Activated B cell treated with CpG ODN at 0.5 μM for 24 hours (primary cell): ENCODE measurements at regions of chr15 and their contacts with region 1.

Region 1: GRCh38 chr15:90886041-90886614 is 1.8 kb downstream of the FES start:
- DNase-seq: peak; percentile 78
- ATAC-seq: peak; percentile 69
- H3K4me3 Mint-ChIP-seq: peak overlapping the region; percentile 71
- H3K27ac Mint-ChIP-seq: peak overlapping the region; percentile 76
- H3K4me1 Mint-ChIP-seq: peaks cover 34% of the 10 kb centered on the region
- H3K27me3 Mint-ChIP-seq: no peaks in the 10 kb centered on the region
- CTCF ChIP-seq: peak; percentile 90

Region 2: GRCh38 chr15:90320061-90320884 is 565.9 kb before region 1 on chr15:
- CTCF ChIA-PET with region 1: interaction called, 23 read pairs
- POLR2A ChIA-PET with region 1: no interaction called
- intact Hi-C with region 1: loop called (anchors 1 kb)
- DNase-seq: peak; percentile 42
- ATAC-seq: peak; percentile 100
- H3K4me3 Mint-ChIP-seq: peak overlapping the region; percentile 5
- H3K27ac Mint-ChIP-seq: no peak overlapping the region
- H3K4me1 Mint-ChIP-seq: peaks cover 2% of the 10 kb centered on the region
- H3K27me3 Mint-ChIP-seq: no peaks in the 10 kb centered on the region
- CTCF ChIP-seq: no peak

Region 3: GRCh38 chr15:90497912-90498311 is 388.2 kb before region 1 on chr15:
- CTCF ChIA-PET with region 1: no interaction called
- POLR2A ChIA-PET with region 1: no interaction called
- intact Hi-C with region 1: loop called (anchors 5 kb)
- DNase-seq: no peak
- ATAC-seq: no peak
- H3K4me3 Mint-ChIP-seq: no peak overlapping the region
- H3K27ac Mint-ChIP-seq: no peak overlapping the region
- H3K4me1 Mint-ChIP-seq: no peaks in the 10 kb centered on the region
- H3K27me3 Mint-ChIP-seq: no peaks in the 10 kb centered on the region
- CTCF ChIP-seq: no peak

Region 4: DNA sequence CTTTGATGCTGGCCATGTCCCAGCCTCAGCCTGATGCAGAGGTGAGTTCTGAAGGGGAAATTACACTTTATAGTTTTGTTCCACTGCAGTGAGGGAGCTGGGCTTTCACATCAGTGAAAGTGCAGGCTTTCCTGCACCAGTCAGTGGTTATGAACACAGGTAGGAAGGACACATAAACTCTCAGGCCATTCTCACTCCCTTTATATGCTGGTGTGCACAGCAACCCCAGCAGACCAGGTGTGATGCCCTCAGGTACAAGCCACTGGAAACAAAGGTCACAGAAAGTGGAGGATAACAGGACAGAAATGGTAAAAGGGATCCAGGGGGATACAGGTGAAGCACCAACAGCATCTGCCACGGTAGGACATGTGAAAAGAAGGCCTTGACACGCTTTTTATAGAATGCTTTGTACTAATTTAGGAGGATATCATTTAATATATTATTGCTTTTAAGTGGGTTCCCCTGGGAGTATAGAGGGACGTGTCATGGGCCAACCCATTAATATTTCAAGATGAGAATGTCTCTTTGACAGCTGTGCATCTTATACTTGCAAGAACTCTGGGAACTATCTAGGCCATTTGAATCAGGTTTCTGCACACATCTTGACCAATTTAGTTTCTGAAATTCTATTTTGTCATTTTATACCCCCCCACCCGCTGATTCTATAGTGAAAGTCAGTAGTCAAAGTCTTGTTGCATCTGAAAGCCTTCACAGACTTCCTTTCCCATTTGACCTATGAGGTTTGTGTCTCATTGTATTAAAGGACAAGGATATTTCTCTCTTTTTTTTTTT is 193.9 kb before region 1 on chr15:
- CTCF ChIA-PET with region 1: interaction called, 14 read pairs
- POLR2A ChIA-PET with region 1: no interaction called
- intact Hi-C with region 1: loop called (anchors 1 kb)
- DNase-seq: no peak
- ATAC-seq: no peak
- H3K4me3 Mint-ChIP-seq: no peak overlapping the region
- H3K27ac Mint-ChIP-seq: no peak overlapping the region
- H3K4me1 Mint-ChIP-seq: no peaks in the 10 kb centered on the region
- H3K27me3 Mint-ChIP-seq: no peaks in the 10 kb centered on the region
- CTCF ChIP-seq: no peak

Region 5: GRCh38 chr15:90808517-90809235 is 77.5 kb before region 1 on chr15:
- CTCF ChIA-PET with region 1: interaction called, 24 read pairs
- POLR2A ChIA-PET with region 1: interaction called, 4 read pairs
- intact Hi-C with region 1: no loop called
- DNase-seq: no peak
- ATAC-seq: peak; percentile 81
- H3K4me3 Mint-ChIP-seq: peak overlapping the region; percentile 79
- H3K27ac Mint-ChIP-seq: peak overlapping the region; percentile 57
- H3K4me1 Mint-ChIP-seq: peaks cover 50% of the 10 kb centered on the region
- H3K27me3 Mint-ChIP-seq: no peaks in the 10 kb centered on the region
- CTCF ChIP-seq: no peak

Region 6: DNA sequence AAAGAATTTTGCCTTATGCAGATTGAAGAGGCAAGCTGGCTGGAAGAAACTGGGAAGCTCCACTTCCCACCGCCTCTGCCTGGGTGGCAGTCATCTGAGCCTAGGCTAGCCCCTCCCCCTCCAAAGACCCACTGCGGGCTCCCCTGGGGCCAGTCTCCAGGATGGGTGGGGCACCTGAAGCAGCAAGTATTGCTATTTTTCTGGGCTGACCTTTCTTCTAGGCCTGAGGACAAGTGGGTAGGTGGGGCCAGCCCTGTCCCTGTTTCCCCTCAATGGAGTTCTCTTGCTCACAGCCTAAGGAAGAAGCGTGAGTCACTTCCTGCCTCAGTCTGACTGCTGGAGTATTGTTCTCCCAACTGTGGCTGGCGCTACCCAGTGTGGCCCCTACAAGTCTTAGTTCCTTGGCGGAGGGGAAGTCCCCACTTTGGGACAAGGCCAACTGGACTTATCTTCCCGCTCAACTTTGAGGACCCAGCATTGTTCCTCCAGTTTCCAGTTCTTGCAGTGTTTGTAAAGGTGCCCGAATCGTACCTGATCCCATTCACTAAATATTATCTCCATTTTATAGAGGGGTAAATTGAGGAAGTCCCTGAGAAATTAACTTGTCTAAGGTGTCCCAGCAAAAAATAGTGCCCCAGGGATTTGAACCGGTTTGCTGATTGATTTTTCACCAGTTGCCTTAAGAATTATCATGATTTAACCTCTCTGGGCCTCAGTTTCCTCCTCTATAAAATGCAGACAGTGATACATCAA is 16.4 kb before region 1 on chr15:
- CTCF ChIA-PET with region 1: interaction called, 10 read pairs
- POLR2A ChIA-PET with region 1: interaction called, 8 read pairs
- intact Hi-C with region 1: loop called (anchors 1 kb)
- DNase-seq: no peak
- ATAC-seq: peak; percentile 47
- H3K4me3 Mint-ChIP-seq: peak overlapping the region; percentile 90
- H3K27ac Mint-ChIP-seq: peak overlapping the region; percentile 59
- H3K4me1 Mint-ChIP-seq: peaks cover 43% of the 10 kb centered on the region
- H3K27me3 Mint-ChIP-seq: no peaks in the 10 kb centered on the region
- CTCF ChIP-seq: no peak